Activated T-helper 1 cell treated with anti-CD3 and anti-CD28 coated beads, Interleukin-12 subunit alpha, Interleukin-12 subunit beta, Interleukin-2, Interleukin-4 antibody, amounts not matched to agents 30 ng/mL and 10 ng/mL and 1 ng/mL, durations not matched to agents 14 hours and 24 hours and 36 hours (primary cell): ENCODE measurements at regions of chr10 and their contacts with region 1.

Region 1: DNA sequence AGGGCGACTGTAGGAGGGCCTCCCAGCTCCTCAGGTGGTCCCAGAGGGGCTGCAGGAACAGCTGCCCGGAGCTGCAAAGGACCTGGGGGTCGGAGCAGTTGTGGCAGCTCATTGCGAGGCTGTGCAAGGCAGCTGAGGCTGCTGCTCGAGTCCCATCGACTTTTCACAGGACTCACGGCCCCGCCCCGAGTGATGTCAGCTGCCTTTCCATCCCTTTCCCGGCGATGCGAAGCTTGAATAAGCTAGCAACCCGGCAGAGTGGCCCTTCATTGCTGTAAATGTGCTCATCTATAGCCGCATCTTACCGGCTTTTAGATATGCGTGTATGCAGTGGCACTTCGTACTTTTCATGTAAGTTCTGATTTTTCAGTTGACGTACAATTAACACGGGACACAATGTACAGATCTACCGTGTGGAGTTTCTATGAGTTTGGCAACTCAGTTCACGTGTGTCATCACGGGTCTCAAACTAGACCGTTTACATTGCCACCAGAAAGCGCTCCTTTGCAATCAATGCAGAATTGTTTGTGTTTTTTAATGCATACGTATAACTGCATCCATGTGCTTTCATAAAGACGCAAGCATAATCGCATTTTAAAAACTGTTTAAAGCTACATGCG is at the start of gene CH25H:
- DNase-seq: peak; percentile 17
- H3K4me3 Mint-ChIP-seq: peak within 1 kb of the TSS; percentile 81
- H3K27ac Mint-ChIP-seq: peak within 1 kb of the TSS; percentile 61
- H3K4me1 Mint-ChIP-seq: peaks cover 11% of the 10 kb centered on the region
- H3K27me3 Mint-ChIP-seq: peaks cover 32% of the 10 kb centered on the region
- total RNA-seq, gene CH25H: not detected in 2 replicates

Region 2: DNA sequence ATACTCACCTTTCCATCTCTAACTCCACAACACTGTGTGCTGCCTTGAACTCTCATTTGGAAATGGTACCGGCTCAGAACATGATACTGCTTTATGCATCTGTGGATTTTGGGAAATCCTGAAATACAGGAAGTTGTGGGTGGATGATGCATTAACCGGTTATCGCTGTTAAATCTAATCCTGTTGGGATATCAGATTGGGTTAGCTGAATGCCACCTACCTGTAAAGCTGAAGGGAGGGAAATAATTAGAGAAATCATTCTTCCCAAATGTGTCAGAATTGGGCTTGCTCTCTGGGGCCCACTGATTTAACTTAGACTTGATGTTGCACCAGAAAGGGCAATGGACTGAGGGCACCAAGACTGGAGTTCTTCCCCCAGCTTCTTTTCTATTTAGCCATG is 54.2 kb before region 1 on chr10:
- intact Hi-C with region 1: no loop called
- DNase-seq: no peak
- H3K4me3 Mint-ChIP-seq: no peak overlapping the region
- H3K27ac Mint-ChIP-seq: no peak overlapping the region
- H3K4me1 Mint-ChIP-seq: no peaks in the 10 kb centered on the region
- H3K27me3 Mint-ChIP-seq: peaks cover 45% of the 10 kb centered on the region

Region 3: GRCh38 chr10:89163265-89163995 is 43.9 kb before region 1 on chr10:
- intact Hi-C with region 1: loop called (anchors 2 kb)
- DNase-seq: peak; percentile 56
- H3K4me3 Mint-ChIP-seq: peak overlapping the region; percentile 57
- H3K27ac Mint-ChIP-seq: peak overlapping the region; percentile 76
- H3K4me1 Mint-ChIP-seq: peaks cover 35% of the 10 kb centered on the region
- H3K27me3 Mint-ChIP-seq: peaks cover 41% of the 10 kb centered on the region

Region 4: DNA sequence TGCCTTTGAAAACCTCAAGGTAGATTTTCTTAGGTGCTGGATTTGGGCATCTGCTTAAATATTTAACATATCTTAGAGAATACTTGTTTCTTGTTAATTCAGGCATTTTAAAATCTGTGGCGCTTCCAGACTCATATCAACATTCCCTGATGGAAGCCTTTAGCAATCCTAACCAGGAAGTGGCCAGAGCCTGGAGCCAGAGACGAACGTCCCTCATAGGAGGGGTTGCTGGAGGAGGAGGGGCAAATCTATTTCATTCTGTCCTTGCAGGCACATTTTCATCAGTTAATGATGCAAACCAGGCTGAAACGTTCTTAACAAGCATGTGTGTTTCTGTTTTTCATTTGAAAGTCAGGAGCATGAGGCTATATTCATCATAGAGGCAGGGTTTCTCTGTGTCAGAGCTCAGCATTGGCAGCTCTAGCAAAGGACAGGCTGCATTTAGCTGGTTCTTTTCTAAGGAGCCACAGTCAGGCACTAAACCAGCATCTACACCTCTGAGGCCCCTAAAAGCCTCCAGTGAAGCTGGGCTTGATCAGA is 76.7 kb after region 1 on chr10:
- intact Hi-C with region 1: no loop called
- DNase-seq: no peak
- H3K4me3 Mint-ChIP-seq: no peak overlapping the region
- H3K27ac Mint-ChIP-seq: no peak overlapping the region
- H3K4me1 Mint-ChIP-seq: no peaks in the 10 kb centered on the region
- H3K27me3 Mint-ChIP-seq: peaks cover 15% of the 10 kb centered on the region

Region 5: DNA sequence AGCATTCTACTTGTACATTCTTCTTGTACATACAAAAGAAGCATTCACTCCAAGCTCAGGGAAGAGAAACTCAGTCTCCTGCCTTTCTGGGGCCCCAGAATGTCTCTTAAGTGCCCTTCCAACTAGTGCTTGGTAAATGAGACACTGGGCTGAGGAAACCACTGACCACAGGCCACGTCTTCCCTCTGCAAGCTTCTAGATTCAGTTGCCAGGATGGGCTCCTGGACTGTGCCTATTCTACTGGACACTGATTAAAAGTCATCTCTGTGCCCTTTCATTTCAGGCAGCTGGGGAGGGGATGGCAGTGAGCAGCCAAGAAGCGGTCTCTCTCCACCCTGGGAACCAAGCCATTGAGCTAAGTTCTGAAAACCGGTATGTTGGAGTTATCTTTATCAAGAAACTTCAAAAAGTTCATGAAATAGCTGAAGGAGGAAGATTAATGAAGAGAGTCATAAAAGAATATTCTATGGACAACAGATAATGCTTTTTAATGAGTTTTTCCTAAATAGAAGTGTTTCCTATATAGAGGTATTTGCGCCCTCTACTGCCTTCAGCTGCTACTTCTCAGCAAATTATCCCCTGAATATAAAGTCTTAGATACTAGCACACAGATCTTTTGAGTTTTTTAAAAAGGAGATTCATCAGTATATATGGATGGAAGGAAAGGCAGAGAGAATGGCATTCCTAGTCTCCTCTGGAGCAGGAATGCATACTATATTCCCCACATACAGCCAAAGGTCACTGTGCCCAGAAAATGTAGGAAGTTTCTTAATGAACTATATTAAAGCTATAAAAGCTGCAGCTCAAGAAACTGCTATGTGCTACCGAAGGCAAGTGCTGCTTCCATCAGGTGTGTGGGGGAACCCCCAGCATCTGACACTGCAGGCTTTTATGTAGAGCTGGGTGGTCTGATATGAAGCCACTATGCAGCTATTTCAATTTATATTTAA is 162.1 kb after region 1 on chr10:
- intact Hi-C with region 1: no loop called
- DNase-seq: no peak
- H3K4me3 Mint-ChIP-seq: no peak overlapping the region
- H3K27ac Mint-ChIP-seq: no peak overlapping the region
- H3K4me1 Mint-ChIP-seq: peaks cover 5% of the 10 kb centered on the region
- H3K27me3 Mint-ChIP-seq: peaks cover 36% of the 10 kb centered on the region

Region 6: DNA sequence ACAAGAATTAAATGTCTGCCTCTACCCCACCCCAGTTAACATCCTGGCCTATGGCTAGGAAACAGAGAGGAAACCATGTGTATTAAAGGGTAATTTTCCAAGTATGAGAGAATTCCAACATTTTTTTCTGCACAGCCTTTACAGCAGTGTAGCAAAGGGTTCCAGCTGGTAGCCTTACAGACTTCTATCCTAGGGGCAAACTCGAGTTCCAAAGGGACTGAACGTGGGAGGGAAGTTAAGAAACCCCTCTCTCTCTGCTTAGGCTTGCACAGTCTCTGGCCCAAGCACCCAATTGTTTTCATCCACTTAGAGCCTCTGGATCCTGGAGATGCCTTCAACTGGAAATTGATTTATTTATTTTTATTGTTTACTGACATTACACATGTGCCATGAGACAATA is 267.8 kb after region 1 on chr10:
- intact Hi-C with region 1: no loop called
- DNase-seq: no peak
- H3K4me3 Mint-ChIP-seq: no peak overlapping the region
- H3K27ac Mint-ChIP-seq: no peak overlapping the region
- H3K4me1 Mint-ChIP-seq: peaks cover 12% of the 10 kb centered on the region
- H3K27me3 Mint-ChIP-seq: peaks cover 7% of the 10 kb centered on the region